Right ventricle myocardium inferior (tissue), 1 donor: ENCODE measurements at regions of chr3 and their contacts with region 1.

Region 1: GRCh38 chr3:17233398-17233800 is 348.6 kb downstream of the PLCL2 start:
- DNase-seq: no peak
- ATAC-seq: peak; percentile 71

Region 2: DNA sequence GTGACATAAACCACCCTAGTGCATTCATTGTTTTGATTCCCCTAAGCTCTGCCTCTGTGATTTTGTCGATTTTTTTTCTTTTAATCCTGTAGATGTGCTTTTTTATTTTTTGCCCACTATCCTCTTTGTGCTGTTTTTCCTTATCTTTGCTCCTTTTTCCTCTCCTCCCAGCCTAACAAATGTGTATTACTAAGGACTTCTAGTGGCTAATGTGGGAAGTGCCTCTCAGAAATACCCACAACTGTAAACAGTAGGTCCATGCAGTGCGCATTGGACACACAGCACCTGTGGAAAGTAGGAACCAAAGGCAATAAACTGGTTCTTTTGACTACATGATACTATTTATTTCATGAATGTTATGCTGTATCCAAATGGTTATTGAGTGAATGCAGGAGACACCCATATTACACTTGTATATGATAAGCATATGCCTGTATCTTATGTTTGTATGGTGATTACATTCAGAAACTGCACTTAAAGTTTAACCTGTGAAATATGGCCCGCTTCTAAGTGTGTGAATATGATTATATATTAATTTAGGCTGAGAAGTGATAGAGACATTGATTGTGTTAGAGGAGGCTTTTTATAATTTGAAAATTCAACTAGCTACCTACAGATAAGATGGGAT is 200.9 kb before region 1 on chr3:
- intact Hi-C with region 1: loop called (anchors 10 kb)
- DNase-seq: no peak
- ATAC-seq: peak; percentile 50